Common myeloid progenitor, CD34-positive (primary cell): ENCODE measurements at regions of chr3 and their contacts with region 1.

Region 1: DNA sequence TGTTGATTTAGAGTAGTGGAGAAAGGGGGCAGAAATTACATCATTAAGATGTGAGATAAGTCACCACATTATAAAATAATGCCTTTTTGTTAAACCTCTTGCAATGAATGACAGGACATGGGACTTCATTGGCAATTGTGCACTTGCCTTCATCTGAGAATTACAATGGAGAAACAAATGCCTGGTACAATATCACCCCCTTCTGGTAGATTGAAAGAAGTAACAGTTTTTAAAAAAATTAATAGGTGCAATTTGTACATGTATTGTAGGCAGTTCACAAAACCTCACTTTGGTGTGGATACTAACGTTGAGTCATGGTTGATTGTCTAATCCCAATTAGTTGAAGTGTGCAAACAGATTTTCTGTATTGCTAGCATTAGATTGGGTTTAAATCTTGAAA is 4.6 kb upstream of the P2RY14 start:
- DNase-seq: peak; percentile 76 to 87 (median 84)
- H3K4me3 ChIP-seq: no peak overlapping the region
- H3K27ac ChIP-seq: no peak overlapping the region
- H3K4me1 ChIP-seq: peaks cover 31 to 51% (median 42%) of the 10 kb centered on the region in 4 experiments
- H3K27me3 ChIP-seq: no peaks in the 10 kb centered on the region

Region 2: DNA sequence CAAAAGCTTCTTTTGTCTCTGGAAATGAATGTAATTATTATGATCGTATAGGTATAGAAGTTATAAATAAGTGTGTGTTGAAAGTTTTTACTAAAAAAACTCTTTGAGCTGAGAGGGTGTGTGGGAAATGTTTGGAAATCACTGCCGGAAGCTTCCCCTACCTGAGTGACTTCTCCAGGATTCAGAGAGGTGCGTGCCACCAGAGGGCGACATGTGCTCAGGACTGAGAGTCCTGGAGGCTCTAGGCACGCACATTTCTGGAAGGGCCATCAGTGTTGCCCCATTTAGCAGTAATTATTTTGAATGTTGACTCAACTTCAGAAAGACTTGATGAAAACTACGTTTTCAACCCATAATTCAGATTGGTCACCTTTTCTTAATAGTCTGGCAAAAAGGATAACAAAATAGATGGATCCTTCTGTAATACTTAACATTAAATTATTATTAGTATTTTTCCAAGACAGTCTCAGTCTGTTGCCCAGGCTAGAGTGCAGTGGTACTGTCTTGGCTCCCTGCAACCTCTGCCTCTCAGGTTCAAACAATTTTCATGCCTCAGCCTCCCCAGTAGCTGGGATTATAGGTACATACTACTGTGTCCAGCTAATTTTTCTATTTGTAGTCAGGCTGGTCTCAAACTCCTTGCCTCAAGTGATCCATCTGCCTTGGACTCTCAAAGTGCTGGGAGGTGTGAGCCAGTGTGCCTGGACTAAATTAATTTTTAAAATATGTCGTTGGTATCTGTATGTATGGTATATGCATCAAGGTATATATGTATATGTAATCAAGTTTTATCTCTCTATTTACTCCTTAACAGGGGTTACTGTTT is 114.4 kb before region 1 on chr3:
- CTCF ChIA-PET with region 1: interaction called, 48 read pairs
- POLR2A ChIA-PET with region 1: no interaction called
- DNase-seq: peak in 2 of 3 donors; percentile 60 to 63
- H3K4me3 ChIP-seq: no peak overlapping the region
- H3K27ac ChIP-seq: no peak overlapping the region
- H3K4me1 ChIP-seq: peaks cover 34 to 51% (median 45%) of the 10 kb centered on the region in 4 experiments
- H3K27me3 ChIP-seq: no peaks in the 10 kb centered on the region

Region 3: GRCh38 chr3:151210676-151211381 is 72.1 kb before region 1 on chr3:
- CTCF ChIA-PET with region 1: interaction called, 32 read pairs
- POLR2A ChIA-PET with region 1: no interaction called
- DNase-seq: peak; percentile 61 to 80 (median 74)
- H3K4me3 ChIP-seq: peak overlapping the region in 4 of 7 experiments; percentile 22 to 66 (median 40)
- H3K27ac ChIP-seq: peak overlapping the region in 1 of 2 experiments; percentile 68
- H3K4me1 ChIP-seq: peaks cover 5 to 36% (median 12%) of the 10 kb centered on the region in 4 experiments
- H3K27me3 ChIP-seq: no peaks in the 10 kb centered on the region

Region 4: GRCh38 chr3:151265866-151266265 is 17.1 kb before region 1 on chr3:
- CTCF ChIA-PET with region 1: interaction called, 18 read pairs
- POLR2A ChIA-PET with region 1: interaction called, 3 read pairs
- DNase-seq: peak; percentile 91 to 98 (median 97)
- H3K4me3 ChIP-seq: peak overlapping the region in 1 of 7 experiments; percentile 35
- H3K27ac ChIP-seq: peak overlapping the region; percentile 95 to 98
- H3K4me1 ChIP-seq: peaks cover 17 to 47% (median 37%) of the 10 kb centered on the region in 4 experiments
- H3K27me3 ChIP-seq: no peaks in the 10 kb centered on the region